Gastrocnemius medialis (tissue), 4 donors: ENCODE measurements at regions of chr4 and their contacts with region 1.

Region 1: GRCh38 chr4:27010334-27010940 is 149.8 kb downstream of the STIM2 start:
- DNase-seq: peak; percentile 16 to 19
- ATAC-seq: peak; percentile 74 to 75
- H3K4me3 ChIP-seq: no peak overlapping the region
- H3K27ac ChIP-seq: no peak overlapping the region
- H3K4me1 ChIP-seq: peaks cover 3 to 10% of the 10 kb centered on the region in 2 donors
- H3K27me3 ChIP-seq: no peaks in the 10 kb centered on the region
- CTCF ChIP-seq: peak; percentile 71 to 89 (median 80)
- POLR2A ChIP-seq: no peak

Region 2: DNA sequence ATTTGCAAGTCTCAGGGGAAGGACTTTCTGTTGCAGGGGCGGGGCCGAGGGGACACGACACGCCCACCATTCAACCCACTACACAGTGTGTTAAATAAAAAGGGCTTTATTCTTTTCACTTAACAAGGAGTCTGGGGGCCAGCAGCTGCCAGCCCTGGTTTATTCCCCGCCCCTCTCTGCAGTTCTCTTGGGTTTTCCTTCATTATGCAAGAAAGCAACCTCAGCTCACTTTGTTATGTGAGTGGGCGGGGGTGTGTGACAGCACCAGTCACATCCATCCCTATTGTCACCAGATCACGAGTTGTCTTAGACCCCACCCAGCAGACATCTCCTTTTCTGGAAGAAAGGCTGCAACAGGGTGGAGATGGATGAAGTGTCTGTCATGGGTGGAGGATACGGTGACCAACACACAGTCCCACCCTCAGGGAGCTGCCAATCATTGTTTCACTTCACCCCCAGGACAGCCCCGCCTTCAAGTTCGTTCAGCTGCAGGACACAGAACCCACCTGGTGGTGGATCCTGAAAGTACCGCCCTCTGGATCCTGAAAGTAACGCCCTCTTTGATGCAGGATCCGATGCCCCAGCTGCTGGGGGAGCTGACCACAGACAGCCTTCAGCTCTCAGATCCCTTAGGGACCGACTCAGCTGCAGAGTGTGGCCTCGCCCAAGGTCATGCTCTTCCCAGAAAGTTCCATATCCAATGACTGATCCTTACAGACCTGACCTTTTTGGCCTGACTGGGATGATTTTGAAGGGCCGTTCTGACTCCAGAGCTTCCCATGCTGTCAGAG is 1016.8 kb before region 1 on chr4:
- in situ Hi-C with region 1: loop called in 1 of 4 experiments (anchors 25 kb)
- intact Hi-C with region 1: loop called (anchors 5 kb)
- DNase-seq: peak in 1 of 2 donors; percentile 41
- ATAC-seq: peak; percentile 52 to 68
- H3K4me3 ChIP-seq: no peak overlapping the region
- H3K27ac ChIP-seq: no peak overlapping the region
- H3K4me1 ChIP-seq: peaks cover 4% of the 10 kb centered on the region in 2 donors
- H3K27me3 ChIP-seq: no peaks in the 10 kb centered on the region
- CTCF ChIP-seq: no peak
- POLR2A ChIP-seq: no peak

Region 3: GRCh38 chr4:26330186-26330787 is 680.1 kb before region 1 on chr4:
- in situ Hi-C with region 1: loop called in 1 of 4 experiments (anchors 25 kb)
- intact Hi-C with region 1: no loop called
- DNase-seq: no peak
- ATAC-seq: peak; percentile 67 to 77
- H3K4me3 ChIP-seq: no peak overlapping the region
- H3K27ac ChIP-seq: no peak overlapping the region
- H3K4me1 ChIP-seq: peaks cover 29 to 55% of the 10 kb centered on the region in 2 donors
- H3K27me3 ChIP-seq: no peaks in the 10 kb centered on the region
- CTCF ChIP-seq: peak; percentile 62 to 75 (median 67)
- POLR2A ChIP-seq: no peak

Region 4: GRCh38 chr4:26459054-26459755 is 551.2 kb before region 1 on chr4:
- in situ Hi-C with region 1: loop called (anchors 5 to 25 kb)
- intact Hi-C with region 1: loop called (anchors 1 kb)
- DNase-seq: no peak
- ATAC-seq: peak in 1 of 2 donors; percentile 62
- H3K4me3 ChIP-seq: no peak overlapping the region
- H3K27ac ChIP-seq: no peak overlapping the region
- H3K4me1 ChIP-seq: no peaks in the 10 kb centered on the region
- H3K27me3 ChIP-seq: no peaks in the 10 kb centered on the region
- CTCF ChIP-seq: peak in 3 of 5 experiments; percentile 45 to 53 (median 52)
- POLR2A ChIP-seq: no peak

Region 5: GRCh38 chr4:26787461-26788340 is 222.7 kb before region 1 on chr4:
- in situ Hi-C with region 1: loop called in 1 of 4 experiments (anchors 25 kb)
- intact Hi-C with region 1: loop called (anchors 5 kb)
- DNase-seq: peak in 1 of 2 donors; percentile 30
- ATAC-seq: peak; percentile 74 to 79
- H3K4me3 ChIP-seq: peak overlapping the region; percentile 7 to 43 (median 18)
- H3K27ac ChIP-seq: peak overlapping the region; percentile 28 to 71 (median 60)
- H3K4me1 ChIP-seq: peaks cover 27 to 39% of the 10 kb centered on the region in 2 donors
- H3K27me3 ChIP-seq: no peaks in the 10 kb centered on the region
- CTCF ChIP-seq: peak in 3 of 5 experiments; percentile 30 to 59 (median 44)
- POLR2A ChIP-seq: no peak

Region 6: GRCh38 chr4:26936284-26937065 is 74.0 kb before region 1 on chr4:
- in situ Hi-C with region 1: no loop called
- intact Hi-C with region 1: no loop called
- DNase-seq: no peak
- ATAC-seq: no peak
- H3K4me3 ChIP-seq: no peak overlapping the region
- H3K27ac ChIP-seq: no peak overlapping the region
- H3K4me1 ChIP-seq: no peaks in the 10 kb centered on the region
- H3K27me3 ChIP-seq: no peaks in the 10 kb centered on the region
- CTCF ChIP-seq: no peak
- POLR2A ChIP-seq: no peak

Region 7: GRCh38 chr4:27138201-27138600 is 127.8 kb after region 1 on chr4:
- in situ Hi-C with region 1: no loop called
- intact Hi-C with region 1: no loop called
- DNase-seq: no peak
- ATAC-seq: no peak
- H3K4me3 ChIP-seq: no peak overlapping the region
- H3K27ac ChIP-seq: no peak overlapping the region
- H3K4me1 ChIP-seq: no peaks in the 10 kb centered on the region
- H3K27me3 ChIP-seq: no peaks in the 10 kb centered on the region
- CTCF ChIP-seq: no peak
- POLR2A ChIP-seq: no peak

Region 8: DNA sequence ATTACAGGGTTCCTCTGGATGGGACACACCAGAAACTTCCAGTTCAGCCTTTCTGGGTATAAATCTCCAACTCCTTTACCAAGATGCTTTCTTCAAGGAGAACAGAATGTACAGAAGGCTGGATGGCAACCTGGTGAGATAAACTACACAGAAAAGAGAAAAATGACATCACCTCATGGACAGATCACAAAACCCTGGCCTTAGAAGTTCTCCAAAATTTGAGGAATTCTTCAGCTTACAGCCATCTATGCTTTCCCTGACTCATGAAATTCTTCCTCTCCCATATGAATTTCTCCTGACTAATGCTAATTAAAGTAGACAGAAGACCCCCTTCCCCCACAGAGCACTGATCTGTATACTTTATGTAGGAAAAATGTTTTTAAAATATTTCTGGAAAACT is 195.6 kb after region 1 on chr4:
- in situ Hi-C with region 1: no loop called
- intact Hi-C with region 1: no loop called
- DNase-seq: no peak
- ATAC-seq: no peak
- H3K4me3 ChIP-seq: no peak overlapping the region
- H3K27ac ChIP-seq: no peak overlapping the region
- H3K4me1 ChIP-seq: no peaks in the 10 kb centered on the region
- H3K27me3 ChIP-seq: no peaks in the 10 kb centered on the region
- CTCF ChIP-seq: no peak
- POLR2A ChIP-seq: no peak